ENCODE measurements at regions of chr7 and their contacts with region 1.

Region 1: GRCh38 chr7:26686448-26686981 is 177.9 kb downstream of the SKAP2 start:
- DNase-seq: peak; percentile 90
- H3K4me3 ChIP-seq: no peak overlapping the region
- H3K27ac ChIP-seq: peak overlapping the region; percentile 78
- H3K4me1 ChIP-seq: peaks cover 91% of the 10 kb centered on the region
- H3K27me3 ChIP-seq: no peaks in the 10 kb centered on the region
- CTCF ChIP-seq: peak; percentile 23 to 35
- POLR2A ChIP-seq: no peak

Region 2: DNA sequence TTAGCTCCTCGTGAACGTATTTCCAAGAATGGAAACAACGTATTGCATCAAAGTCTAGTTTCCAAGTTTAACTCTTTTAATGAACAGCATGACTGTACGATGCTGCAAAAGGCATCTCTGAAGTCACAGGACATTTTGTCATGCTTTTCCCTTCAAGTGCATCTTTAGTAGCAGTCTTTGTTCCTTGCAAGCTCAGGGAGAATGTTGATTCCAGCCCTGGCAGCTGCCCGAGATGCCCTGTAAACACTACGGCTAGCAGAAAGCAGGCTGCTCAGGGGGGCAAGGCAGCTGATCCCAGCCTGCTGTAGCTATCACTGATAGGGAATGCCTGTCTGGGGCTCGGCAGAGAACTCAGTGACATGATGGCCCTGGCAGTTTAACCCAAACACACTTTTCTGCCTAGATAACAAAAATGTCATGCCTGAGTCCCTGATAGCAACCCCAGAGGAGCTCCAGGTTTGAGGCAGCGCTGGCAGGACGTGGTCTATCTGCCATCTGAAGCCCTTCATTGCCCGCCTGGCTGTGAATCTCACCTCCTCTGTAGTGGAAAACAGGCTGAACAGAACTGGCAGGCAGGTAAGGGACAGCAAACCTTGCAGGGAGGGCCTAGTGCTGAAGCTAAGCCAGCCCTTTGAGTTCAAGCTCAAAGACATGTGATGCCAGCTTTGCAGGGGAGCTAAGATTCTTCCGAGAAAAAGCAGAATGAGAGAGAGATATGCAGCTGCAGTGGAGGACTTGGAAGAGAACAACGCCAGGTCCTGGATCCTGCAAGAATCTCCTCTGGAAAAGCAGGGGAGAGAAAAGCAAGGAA is 130.2 kb before region 1 on chr7:
- CTCF ChIA-PET with region 1: no interaction called
- POLR2A ChIA-PET with region 1: no interaction called
- dilution Hi-C with region 1: no loop called
- intact Hi-C with region 1: no loop called
- DNase-seq: no peak
- H3K4me3 ChIP-seq: no peak overlapping the region
- H3K27ac ChIP-seq: no peak overlapping the region
- H3K4me1 ChIP-seq: no peaks in the 10 kb centered on the region
- H3K27me3 ChIP-seq: peaks cover 3 to 10% of the 10 kb centered on the region in 2 experiments
- CTCF ChIP-seq: no peak
- POLR2A ChIP-seq: no peak

Region 3: GRCh38 chr7:26705567-26705966 is 19.1 kb after region 1 on chr7:
- CTCF ChIA-PET with region 1: interaction called, 46 read pairs
- POLR2A ChIA-PET with region 1: no interaction called
- dilution Hi-C with region 1: no loop called
- intact Hi-C with region 1: loop called (anchors 2 kb)
- DNase-seq: peak; percentile 96
- H3K4me3 ChIP-seq: no peak overlapping the region
- H3K27ac ChIP-seq: peak overlapping the region; percentile 63
- H3K4me1 ChIP-seq: peaks cover 21% of the 10 kb centered on the region
- H3K27me3 ChIP-seq: no peaks in the 10 kb centered on the region
- CTCF ChIP-seq: no peak
- POLR2A ChIP-seq: peak; percentile 23

Region 4: GRCh38 chr7:26853788-26854393 is 167.4 kb after region 1 on chr7:
- CTCF ChIA-PET with region 1: interaction called, 7 read pairs
- POLR2A ChIA-PET with region 1: no interaction called
- dilution Hi-C with region 1: no loop called
- intact Hi-C with region 1: loop called (anchors 1 kb)
- DNase-seq: peak; percentile 69
- H3K4me3 ChIP-seq: no peak overlapping the region
- H3K27ac ChIP-seq: no peak overlapping the region
- H3K4me1 ChIP-seq: peaks cover 34% of the 10 kb centered on the region
- H3K27me3 ChIP-seq: no peaks in the 10 kb centered on the region
- CTCF ChIP-seq: peak; percentile 24 to 26
- POLR2A ChIP-seq: no peak

Region 5: GRCh38 chr7:27130540-27131389 is 444.2 kb after region 1 on chr7 and contains the start of gene HOXA4:
- CTCF ChIA-PET with region 1: interaction called, 11 read pairs
- POLR2A ChIA-PET with region 1: interaction called, 4 read pairs
- dilution Hi-C with region 1: no loop called
- intact Hi-C with region 1: no loop called
- DNase-seq: peak; percentile 89
- H3K4me3 ChIP-seq: peak within 1 kb of the TSS; percentile 36 to 60 (median 58)
- H3K27ac ChIP-seq: peak within 1 kb of the TSS; percentile 67
- H3K4me1 ChIP-seq: peaks cover 66% of the 10 kb centered on the region
- H3K27me3 ChIP-seq: no peaks in the 10 kb centered on the region
- CTCF ChIP-seq: no peak
- POLR2A ChIP-seq: peak; percentile 57
- total RNA-seq, gene HOXA4: 7.5 and 8.1 TPM in 2 replicates

Region 6: DNA sequence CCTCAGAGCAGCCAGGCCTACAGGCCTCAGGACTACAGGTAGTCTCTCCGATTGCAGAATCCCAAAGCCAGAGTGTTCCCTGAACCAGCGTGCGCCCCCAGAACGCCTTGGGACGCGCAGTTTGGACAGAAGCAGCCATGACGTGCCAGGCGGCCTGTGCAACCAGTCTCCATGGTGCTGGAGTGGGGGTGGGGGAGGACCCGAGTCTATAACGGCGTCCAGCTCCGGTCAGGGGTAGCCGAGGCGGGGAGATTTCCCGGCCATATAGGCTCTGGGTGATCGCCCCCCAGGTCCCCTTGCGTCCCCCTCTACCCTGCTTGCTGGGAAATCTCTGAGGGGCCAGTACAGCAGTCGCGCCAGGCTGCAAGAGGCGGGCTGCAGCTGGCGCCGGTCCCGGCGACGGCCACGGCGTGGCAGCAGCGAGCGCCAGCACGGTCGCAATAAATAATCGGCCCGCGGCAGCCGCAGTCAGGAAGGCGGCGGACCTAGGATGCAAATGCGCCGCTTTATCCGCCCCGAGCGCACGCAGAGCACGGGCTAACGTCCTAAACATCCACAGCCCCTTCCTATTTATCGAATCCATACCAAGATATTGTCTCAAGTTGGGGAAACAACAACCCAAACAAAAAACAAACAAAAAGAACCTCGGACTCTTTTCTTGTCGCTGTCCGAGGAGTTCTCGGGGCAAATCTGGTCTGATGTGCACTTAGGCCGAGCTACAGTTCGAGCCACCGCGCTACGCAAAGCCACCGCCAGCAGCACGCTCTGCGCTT is 464.2 kb after region 1 on chr7:
- CTCF ChIA-PET with region 1: interaction called, 68 read pairs
- POLR2A ChIA-PET with region 1: interaction called, 4 read pairs
- dilution Hi-C with region 1: no loop called
- intact Hi-C with region 1: no loop called
- DNase-seq: peak; percentile 91
- H3K4me3 ChIP-seq: peak overlapping the region; percentile 54 to 85 (median 55)
- H3K27ac ChIP-seq: peak overlapping the region; percentile 96
- H3K4me1 ChIP-seq: peaks cover 75% of the 10 kb centered on the region
- H3K27me3 ChIP-seq: no peaks in the 10 kb centered on the region
- CTCF ChIP-seq: peak; percentile 81 to 89
- POLR2A ChIP-seq: peak; percentile 86

Region 7: GRCh38 chr7:27179503-27180430 is 493.3 kb after region 1 on chr7:
- CTCF ChIA-PET with region 1: interaction called, 17 read pairs
- POLR2A ChIA-PET with region 1: no interaction called
- dilution Hi-C with region 1: no loop called
- intact Hi-C with region 1: no loop called
- DNase-seq: peak; percentile 90
- H3K4me3 ChIP-seq: peak overlapping the region; percentile 53 to 94 (median 69)
- H3K27ac ChIP-seq: peak overlapping the region; percentile 96
- H3K4me1 ChIP-seq: peaks cover 65% of the 10 kb centered on the region
- H3K27me3 ChIP-seq: no peaks in the 10 kb centered on the region
- CTCF ChIP-seq: peak; percentile 93 to 97
- POLR2A ChIP-seq: no peak